Activated CD4-positive, alpha-beta T cell treated with anti-CD3 and anti-CD28 coated beads, Interleukin-2, amount 10 ng/mL, durations not matched to agents 7 days and 5 days (primary cell): ENCODE measurements at regions of chr5 and their contacts with region 1.

Region 1: DNA sequence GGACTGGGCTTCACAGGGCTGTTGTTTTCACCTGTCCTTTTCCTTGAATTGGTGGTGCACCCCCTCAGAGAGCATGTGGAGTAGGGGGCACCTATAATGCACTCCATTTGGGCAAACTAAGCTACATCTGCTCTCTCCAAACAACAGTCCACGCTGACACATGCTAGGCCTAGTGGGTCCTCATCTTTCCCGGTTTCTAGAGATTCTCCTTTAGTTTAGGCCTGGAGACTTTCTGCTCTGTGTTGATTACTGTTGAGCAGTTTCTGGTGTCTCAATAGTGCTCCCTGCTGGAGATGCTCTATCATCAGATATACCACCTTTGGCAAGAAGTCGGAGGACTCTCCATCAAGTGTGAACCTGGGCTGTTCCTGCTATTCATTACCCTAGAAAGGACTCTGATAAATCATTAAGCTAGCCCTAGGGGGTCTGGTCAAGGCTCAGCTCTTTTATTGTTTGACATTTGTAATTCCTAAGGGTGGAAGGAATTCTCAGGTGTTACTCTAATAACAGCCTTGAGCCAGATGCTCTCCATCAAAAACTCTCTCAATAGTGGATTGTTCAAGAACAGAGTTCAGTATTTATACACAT is 64.0 kb upstream of the FYB1 start:
- DNase-seq: peak; percentile 83
- H3K4me3 Mint-ChIP-seq: no peak overlapping the region
- H3K27ac Mint-ChIP-seq: peak overlapping the region; percentile 47
- H3K4me1 Mint-ChIP-seq: peaks cover 31% of the 10 kb centered on the region
- H3K27me3 Mint-ChIP-seq: peaks cover 10% of the 10 kb centered on the region

Region 2: DNA sequence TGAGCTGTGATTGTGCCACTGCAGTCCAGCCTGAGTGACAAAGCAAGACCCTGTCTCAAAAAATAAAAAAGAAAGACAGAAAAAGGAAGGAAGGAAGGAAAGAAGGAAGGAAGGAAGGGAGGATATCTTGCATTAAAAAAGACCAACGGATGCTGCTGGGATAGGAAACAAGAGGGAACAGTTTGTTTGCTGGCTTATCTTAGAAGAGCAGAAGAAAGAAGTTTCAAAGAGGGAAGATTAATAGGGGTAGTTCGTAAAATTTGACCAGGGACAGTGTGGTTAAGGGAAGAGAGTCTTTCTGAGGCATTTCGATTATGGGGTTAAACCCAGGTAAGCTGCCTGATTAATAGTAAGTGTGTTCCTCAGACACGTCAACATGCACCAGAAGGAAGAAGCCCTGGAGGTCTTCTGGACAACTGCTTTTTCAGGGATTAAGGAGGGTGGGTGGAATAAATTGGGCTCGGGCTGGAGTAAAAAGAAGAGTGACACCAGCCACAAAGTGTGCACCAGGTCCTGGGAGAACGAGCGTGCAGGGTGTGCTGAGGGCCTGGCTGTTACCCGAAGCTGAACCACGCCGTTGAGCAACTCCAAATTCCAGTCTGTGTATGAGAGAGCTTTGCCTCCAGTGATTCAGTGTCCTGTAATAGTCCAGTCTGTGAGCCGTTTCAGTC is 88.7 kb before region 1 on chr5:
- CTCF ChIA-PET with region 1: interaction called, 11 read pairs
- POLR2A ChIA-PET with region 1: no interaction called
- DNase-seq: no peak
- H3K4me3 Mint-ChIP-seq: peak overlapping the region; percentile 81
- H3K27ac Mint-ChIP-seq: peak overlapping the region; percentile 84
- H3K4me1 Mint-ChIP-seq: peaks cover 73% of the 10 kb centered on the region
- H3K27me3 Mint-ChIP-seq: no peaks in the 10 kb centered on the region

Region 3: DNA sequence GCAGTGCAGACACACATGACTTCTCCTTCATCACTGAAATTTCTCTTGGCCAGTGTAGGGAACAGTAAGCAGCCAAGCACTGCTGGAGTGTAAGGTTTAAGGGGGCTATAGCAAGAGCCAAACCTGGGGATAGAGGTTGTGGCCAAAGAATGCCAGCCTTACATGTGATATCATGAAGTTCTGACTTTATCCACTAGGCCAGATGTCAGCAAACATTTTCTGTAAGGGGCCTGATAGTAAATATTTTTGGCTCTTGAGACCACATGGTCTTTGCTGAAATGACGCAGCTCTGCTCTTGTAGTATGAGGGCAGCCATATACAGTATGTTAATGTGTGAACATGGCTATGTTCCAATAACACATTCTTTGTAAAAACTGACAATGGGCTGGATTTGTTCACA is 34.3 kb before region 1 on chr5:
- CTCF ChIA-PET with region 1: no interaction called
- POLR2A ChIA-PET with region 1: no interaction called
- DNase-seq: no peak
- H3K4me3 Mint-ChIP-seq: no peak overlapping the region
- H3K27ac Mint-ChIP-seq: no peak overlapping the region
- H3K4me1 Mint-ChIP-seq: no peaks in the 10 kb centered on the region
- H3K27me3 Mint-ChIP-seq: no peaks in the 10 kb centered on the region